Natural killer cell (primary cell): ENCODE measurements at regions of chr2 and their contacts with region 1.

Region 1: DNA sequence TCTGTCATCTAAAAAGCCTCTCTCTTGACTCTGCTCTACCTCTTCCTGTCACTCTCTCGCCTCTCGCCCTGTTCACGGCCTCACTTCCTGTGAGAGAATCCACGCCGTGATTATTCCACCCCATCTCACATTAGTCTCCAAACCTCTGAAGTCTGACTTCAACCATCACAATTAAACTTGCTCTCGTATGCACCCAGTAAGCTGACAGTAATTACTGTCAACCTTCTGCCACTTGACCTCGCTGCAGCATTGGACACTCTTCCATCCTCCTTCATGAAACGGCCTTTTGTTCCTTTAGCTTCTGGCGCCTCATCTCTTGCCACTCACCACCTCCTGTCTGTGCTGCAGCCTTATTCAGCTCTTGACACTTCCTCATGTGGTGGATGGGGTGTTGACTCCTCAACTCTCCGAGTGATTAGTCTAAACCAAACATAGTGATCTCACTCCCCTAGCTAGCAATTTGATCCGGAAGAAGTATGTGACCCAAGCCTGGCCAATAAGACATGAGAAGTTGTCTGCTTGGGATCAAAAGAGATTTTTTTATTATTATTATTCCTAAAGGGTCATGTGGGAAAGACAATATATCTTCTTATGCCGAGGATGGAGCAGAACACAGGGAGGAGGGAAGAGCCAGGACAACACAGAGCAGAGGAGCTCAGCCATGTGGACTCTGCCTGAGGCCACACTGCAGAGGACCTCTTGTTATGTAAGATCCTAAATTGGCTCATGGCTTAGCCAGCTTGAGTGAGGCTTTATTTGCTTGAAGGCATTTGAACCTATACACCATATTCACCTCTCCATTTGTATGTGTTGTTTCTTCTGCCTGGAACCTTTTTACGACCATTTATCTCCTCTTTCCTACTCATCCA is 38.4 kb upstream of the MYO1B start:
- DNase-seq: peak; percentile 67 to 78
- ATAC-seq: peak; percentile 80 to 91 (median 88)
- H3K4me3 ChIP-seq: peak overlapping the region; percentile 59
- H3K4me3 Mint-ChIP-seq: peak overlapping the region; percentile 95
- H3K27ac ChIP-seq: peak overlapping the region; percentile 99
- H3K27ac Mint-ChIP-seq: peak overlapping the region; percentile 92 to 93
- H3K4me1 ChIP-seq: peaks cover 48% of the 10 kb centered on the region
- H3K4me1 Mint-ChIP-seq: peaks cover 46 to 51% of the 10 kb centered on the region in 2 donors
- H3K27me3 ChIP-seq: no peaks in the 10 kb centered on the region
- H3K27me3 Mint-ChIP-seq: no peaks in the 10 kb centered on the region
- CTCF ChIP-seq: no peak

Region 2: DNA sequence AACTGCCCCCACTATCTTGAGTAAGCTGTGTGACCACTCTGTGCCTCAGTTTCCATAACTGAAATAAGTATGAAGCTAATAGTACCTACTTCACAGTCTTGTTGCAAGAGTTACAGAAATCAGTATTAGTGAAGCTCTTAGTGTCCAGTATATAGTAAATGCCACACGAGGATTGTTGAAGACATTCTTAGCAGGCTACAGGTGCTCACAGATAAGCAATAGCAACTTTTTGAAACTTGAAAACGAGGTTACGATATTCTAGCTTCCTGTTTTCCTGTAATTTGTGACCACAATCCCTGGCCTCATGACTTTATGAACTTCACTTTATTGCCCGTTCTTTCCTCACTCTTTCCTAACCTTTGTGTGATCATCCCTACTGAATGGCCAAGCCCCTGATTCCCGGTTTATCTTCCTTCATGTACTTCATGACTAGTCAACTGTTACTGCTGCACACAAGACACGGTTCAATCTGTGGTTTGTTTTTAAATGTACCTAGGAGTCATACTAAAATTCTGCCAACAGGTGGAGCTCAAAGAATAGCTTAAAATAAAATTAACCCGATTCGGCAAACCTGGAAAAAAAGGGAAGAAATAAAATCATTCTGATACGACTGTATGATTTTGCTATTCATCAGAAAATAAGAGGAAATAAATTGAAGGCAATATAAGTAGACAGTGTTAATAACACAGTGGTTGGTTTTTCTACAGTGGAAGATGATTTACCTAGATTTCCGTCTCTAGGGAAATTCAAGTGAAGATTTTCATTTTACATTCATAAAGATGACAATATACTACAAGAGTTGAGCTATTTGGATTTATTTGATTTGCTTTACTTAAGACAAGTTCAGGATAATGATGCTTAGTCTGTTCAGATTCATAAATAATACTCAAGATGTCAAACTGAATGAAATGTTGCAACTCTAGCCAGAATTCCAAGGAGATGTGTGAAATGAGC is 154.7 kb before region 1 on chr2:
- intact Hi-C with region 1: loop called (anchors 2 kb)
- DNase-seq: peak in 1 of 2 donors; percentile 78
- ATAC-seq: peak; percentile 48 to 52 (median 49)
- H3K4me3 ChIP-seq: no peak overlapping the region
- H3K4me3 Mint-ChIP-seq: no peak overlapping the region
- H3K27ac ChIP-seq: no peak overlapping the region
- H3K27ac Mint-ChIP-seq: no peak overlapping the region
- H3K4me1 ChIP-seq: peaks cover 32% of the 10 kb centered on the region
- H3K4me1 Mint-ChIP-seq: peaks cover 33 to 42% of the 10 kb centered on the region in 2 donors
- H3K27me3 ChIP-seq: no peaks in the 10 kb centered on the region
- H3K27me3 Mint-ChIP-seq: no peaks in the 10 kb centered on the region
- CTCF ChIP-seq: peak; percentile 83

Region 3: GRCh38 chr2:191128172-191128910 is 78.5 kb before region 1 on chr2:
- intact Hi-C with region 1: loop called (anchors 5 kb)
- DNase-seq: peak in 1 of 2 donors; percentile 65
- ATAC-seq: peak; percentile 68 to 86 (median 75)
- H3K4me3 ChIP-seq: peak overlapping the region; percentile 0
- H3K4me3 Mint-ChIP-seq: peak overlapping the region; percentile 71
- H3K27ac ChIP-seq: peak overlapping the region; percentile 86
- H3K27ac Mint-ChIP-seq: peak overlapping the region; percentile 86 to 98
- H3K4me1 ChIP-seq: peaks cover 34% of the 10 kb centered on the region
- H3K4me1 Mint-ChIP-seq: peaks cover 72 to 79% of the 10 kb centered on the region in 2 donors
- H3K27me3 ChIP-seq: no peaks in the 10 kb centered on the region
- H3K27me3 Mint-ChIP-seq: no peaks in the 10 kb centered on the region
- CTCF ChIP-seq: no peak

Region 4: DNA sequence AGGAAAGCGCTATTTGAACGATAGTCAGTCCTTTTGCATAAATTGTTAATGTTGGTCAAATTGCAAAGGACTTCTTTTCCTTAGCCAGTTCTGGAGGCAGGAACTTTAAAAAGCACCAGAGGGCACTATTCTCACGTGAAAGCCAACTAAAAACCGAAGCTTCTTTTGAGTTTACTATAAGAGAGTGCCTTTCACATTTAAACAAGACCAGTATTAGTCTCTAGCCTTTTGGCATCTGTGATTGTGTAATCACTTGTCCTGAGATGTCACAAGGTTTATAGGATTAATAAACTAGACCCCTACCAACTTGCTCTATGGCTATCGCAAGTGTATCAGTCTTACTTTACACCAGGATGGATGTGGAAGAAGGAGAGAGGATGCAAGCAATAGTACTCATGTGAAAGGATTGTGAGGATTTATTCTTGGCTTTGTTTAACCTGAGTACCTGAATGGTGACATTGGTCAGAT is 41.6 kb before region 1 on chr2:
- intact Hi-C with region 1: loop called (anchors 1 kb)
- DNase-seq: peak in 1 of 2 donors; percentile 74
- ATAC-seq: peak; percentile 74 to 91 (median 84)
- H3K4me3 ChIP-seq: no peak overlapping the region
- H3K4me3 Mint-ChIP-seq: no peak overlapping the region
- H3K27ac ChIP-seq: no peak overlapping the region
- H3K27ac Mint-ChIP-seq: no peak overlapping the region
- H3K4me1 ChIP-seq: no peaks in the 10 kb centered on the region
- H3K4me1 Mint-ChIP-seq: peaks cover 6% of the 10 kb centered on the region in 2 donors
- H3K27me3 ChIP-seq: no peaks in the 10 kb centered on the region
- H3K27me3 Mint-ChIP-seq: peaks cover 0 to 8% of the 10 kb centered on the region in 2 donors
- CTCF ChIP-seq: peak; percentile 79

Region 5: DNA sequence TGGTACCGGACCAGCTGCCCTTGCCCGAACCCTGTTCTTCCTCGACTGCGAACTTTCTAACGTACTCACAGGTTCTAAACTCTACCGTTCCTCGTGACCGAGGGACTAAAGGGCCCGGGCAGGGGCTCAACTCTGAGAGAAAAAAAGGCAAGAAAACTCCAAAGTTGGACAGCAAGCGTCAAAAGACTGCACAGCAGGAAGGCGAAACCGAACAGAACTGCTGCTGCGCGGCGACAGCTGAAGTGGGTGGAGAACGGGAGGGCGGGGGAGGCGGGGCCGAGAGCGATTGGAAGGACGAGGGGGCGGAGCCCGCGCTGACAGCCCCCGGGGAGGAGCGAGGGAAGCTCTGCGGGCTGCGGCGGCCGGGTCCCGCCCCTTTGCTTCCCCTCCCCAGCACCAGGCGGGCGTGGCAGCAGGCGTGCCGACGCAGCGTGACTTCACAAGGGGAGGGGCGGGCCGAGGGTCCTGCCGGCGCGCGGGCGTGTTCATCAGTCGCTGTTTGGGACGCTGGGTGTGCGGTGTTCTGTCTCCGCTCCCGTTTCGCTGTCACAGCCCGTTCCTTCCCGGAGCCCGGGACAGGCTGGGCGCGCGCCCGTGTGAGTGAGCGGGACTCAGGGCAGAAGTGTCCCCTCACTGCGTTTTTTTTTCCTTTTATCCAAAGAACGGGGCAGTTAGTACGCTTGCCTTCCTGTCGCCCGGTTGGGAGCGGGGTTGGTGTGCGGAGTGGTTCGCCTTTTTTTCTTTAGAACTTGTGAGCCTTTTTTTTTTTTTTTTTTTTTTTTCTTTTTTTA is 471.0 kb after region 1 on chr2 and contains the start of gene NABP1:
- intact Hi-C with region 1: loop called (anchors 5 kb)
- DNase-seq: peak; percentile 98 to 99
- ATAC-seq: peak; percentile 85 to 97 (median 90)
- H3K4me3 ChIP-seq: peak within 1 kb of the TSS; percentile 63
- H3K4me3 Mint-ChIP-seq: peak within 1 kb of the TSS; percentile 98
- H3K27ac ChIP-seq: peak within 1 kb of the TSS; percentile 93
- H3K27ac Mint-ChIP-seq: peak within 1 kb of the TSS; percentile 99
- H3K4me1 ChIP-seq: peaks cover 35% of the 10 kb centered on the region
- H3K4me1 Mint-ChIP-seq: peaks cover 62 to 64% of the 10 kb centered on the region in 2 donors
- H3K27me3 ChIP-seq: no peaks in the 10 kb centered on the region
- H3K27me3 Mint-ChIP-seq: no peaks in the 10 kb centered on the region
- CTCF ChIP-seq: no peak
- total RNA-seq, gene NABP1: 44.5 to 52.2 (median 45.7) TPM